PC-9 (cell line): ENCODE measurements at regions of chr1 and their contacts with region 1.

Region 1: GRCh38 chr1:214551436-214552173 is at the start of gene PTPN14:
- DNase-seq: peak; percentile 89 to 93
- H3K4me3 ChIP-seq: peak within 1 kb of the TSS; percentile 71
- H3K27ac ChIP-seq: peak within 1 kb of the TSS; percentile 97
- H3K4me1 ChIP-seq: peaks cover 48% of the 10 kb centered on the region
- H3K27me3 ChIP-seq: no peaks in the 10 kb centered on the region
- CTCF ChIP-seq: no peak; the same call in 1 of the 2 replicates
- total RNA-seq, gene PTPN14: 59.2 and 78.9 TPM in 2 replicates

Region 2: DNA sequence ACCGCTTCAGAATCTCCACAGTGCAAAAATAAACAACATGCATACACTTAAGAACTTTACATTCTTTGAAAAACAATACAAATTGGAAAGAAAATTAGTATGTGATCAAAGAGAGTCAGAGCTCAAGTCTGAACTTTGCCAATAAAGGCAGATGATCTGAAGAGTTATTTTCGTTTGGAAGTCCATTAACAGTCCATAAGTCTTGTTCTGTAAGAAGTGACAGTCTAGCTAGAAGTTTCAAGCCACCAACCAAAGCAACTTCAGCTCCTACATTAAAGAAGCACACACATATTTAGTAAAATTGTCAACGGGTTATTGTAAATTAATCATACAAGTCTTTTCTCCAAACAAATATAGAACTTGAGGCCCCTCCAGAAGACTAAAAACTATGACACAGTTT is 1556.7 kb before region 1 on chr1:
- CTCF ChIA-PET with region 1: no interaction called
- POLR2A ChIA-PET with region 1: no interaction called
- intact Hi-C with region 1: no loop called
- DNase-seq: no peak
- H3K4me3 ChIP-seq: no peak overlapping the region
- H3K27ac ChIP-seq: no peak overlapping the region
- H3K4me1 ChIP-seq: no peaks in the 10 kb centered on the region
- H3K27me3 ChIP-seq: no peaks in the 10 kb centered on the region
- CTCF ChIP-seq: no peak

Region 3: DNA sequence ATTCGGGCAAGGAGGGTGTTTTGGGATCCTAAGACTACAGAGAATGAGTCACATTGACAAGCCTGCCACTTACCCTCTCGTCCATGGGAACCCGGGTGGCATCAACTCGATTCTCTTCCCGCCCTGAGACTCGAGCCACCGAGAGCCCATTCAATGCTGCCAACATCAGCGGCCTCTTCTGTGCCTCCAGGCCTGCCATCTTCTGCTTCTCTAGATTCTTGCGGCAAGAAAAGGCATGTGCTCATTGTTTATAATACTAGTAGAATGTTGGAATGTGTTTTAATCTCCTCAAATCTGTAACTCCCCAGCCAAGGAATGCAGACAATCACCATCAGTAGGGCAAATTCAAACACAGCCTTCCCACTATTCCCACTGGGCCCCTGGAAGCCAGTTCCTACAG is 173.7 kb before region 1 on chr1:
- CTCF ChIA-PET with region 1: no interaction called
- POLR2A ChIA-PET with region 1: interaction called, 4 read pairs
- intact Hi-C with region 1: loop called (anchors 1 kb)
- DNase-seq: peak in 1 of 2 experiments; percentile 83
- H3K4me3 ChIP-seq: no peak overlapping the region
- H3K27ac ChIP-seq: no peak overlapping the region
- H3K4me1 ChIP-seq: peaks cover 26% of the 10 kb centered on the region
- H3K27me3 ChIP-seq: no peaks in the 10 kb centered on the region
- CTCF ChIP-seq: no peak

Region 4: DNA sequence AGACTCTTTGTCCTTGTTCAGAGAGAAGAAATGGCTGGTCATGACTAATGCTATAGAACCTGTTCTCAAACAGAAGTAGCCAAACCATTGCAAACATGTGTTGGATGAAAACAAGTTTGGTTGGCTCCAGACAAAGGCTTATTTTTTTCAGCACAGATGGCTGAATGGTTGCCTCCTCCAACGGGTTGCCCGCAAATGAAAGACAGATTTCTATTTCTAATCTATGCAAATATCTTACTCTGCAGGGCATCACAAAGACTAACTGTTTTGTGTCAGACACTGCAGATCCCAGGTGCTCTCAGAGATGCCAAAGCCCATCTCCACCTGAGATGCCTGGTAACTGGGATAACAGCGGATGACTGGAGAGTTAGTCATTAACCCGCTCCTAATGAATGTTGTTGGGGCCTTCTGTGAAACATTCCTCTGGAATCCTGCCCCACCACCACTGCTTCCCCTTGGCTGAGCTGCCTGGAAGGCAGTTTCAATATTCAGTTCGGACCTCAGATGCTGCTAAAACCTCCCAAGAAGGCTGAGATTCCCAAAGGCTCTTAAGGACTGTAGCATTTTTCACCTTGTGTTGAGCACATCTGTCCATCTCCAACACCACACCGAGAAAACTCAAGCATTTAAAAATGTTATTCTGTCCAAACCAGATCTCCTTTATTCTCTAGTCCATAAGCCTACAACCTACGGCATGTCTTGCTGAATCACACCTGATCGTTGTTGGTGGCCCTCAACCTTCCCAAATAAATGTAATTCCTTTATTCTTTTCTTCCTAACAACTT is 104.6 kb before region 1 on chr1:
- CTCF ChIA-PET with region 1: no interaction called
- POLR2A ChIA-PET with region 1: no interaction called
- intact Hi-C with region 1: loop called (anchors 1 kb)
- DNase-seq: peak; percentile 85 to 99
- H3K4me3 ChIP-seq: peak overlapping the region; percentile 44; the same call in 1 of the 2 replicates
- H3K27ac ChIP-seq: peak overlapping the region; percentile 90
- H3K4me1 ChIP-seq: peaks cover 50% of the 10 kb centered on the region
- H3K27me3 ChIP-seq: no peaks in the 10 kb centered on the region
- CTCF ChIP-seq: no peak

Region 5: GRCh38 chr1:214506972-214507482 is 44.6 kb before region 1 on chr1:
- CTCF ChIA-PET with region 1: no interaction called
- POLR2A ChIA-PET with region 1: interaction called, 13 read pairs
- intact Hi-C with region 1: loop called (anchors 1 kb)
- DNase-seq: peak; percentile 75 to 97
- H3K4me3 ChIP-seq: peak overlapping the region; percentile 6; the same call in 1 of the 2 replicates
- H3K27ac ChIP-seq: peak overlapping the region; percentile 13; the same call in 1 of the 2 replicates
- H3K4me1 ChIP-seq: peaks cover 47% of the 10 kb centered on the region
- H3K27me3 ChIP-seq: no peaks in the 10 kb centered on the region
- CTCF ChIP-seq: no peak

Region 6: GRCh38 chr1:214525535-214526019 is 26.0 kb before region 1 on chr1:
- CTCF ChIA-PET with region 1: interaction called, 3 read pairs
- POLR2A ChIA-PET with region 1: interaction called, 26 read pairs
- intact Hi-C with region 1: loop called (anchors 1 kb)
- DNase-seq: peak; percentile 77 to 96
- H3K4me3 ChIP-seq: peak overlapping the region; percentile 4; the same call in 1 of the 2 replicates
- H3K27ac ChIP-seq: peak overlapping the region; percentile 43
- H3K4me1 ChIP-seq: peaks cover 37% of the 10 kb centered on the region
- H3K27me3 ChIP-seq: no peaks in the 10 kb centered on the region
- CTCF ChIP-seq: no peak

Region 7: GRCh38 chr1:214602764-214603657 is 51.4 kb after region 1 on chr1 and contains the start of gene CENPF:
- CTCF ChIA-PET with region 1: no interaction called
- POLR2A ChIA-PET with region 1: interaction called, 8 read pairs
- intact Hi-C with region 1: loop called (anchors 1 kb)
- DNase-seq: peak; percentile 96 to 97
- H3K4me3 ChIP-seq: peak within 1 kb of the TSS; percentile 74
- H3K27ac ChIP-seq: no peak within 1 kb of the TSS
- H3K4me1 ChIP-seq: peaks cover 12% of the 10 kb centered on the region
- H3K27me3 ChIP-seq: no peaks in the 10 kb centered on the region
- CTCF ChIP-seq: no peak
- total RNA-seq, gene CENPF: 102 and 156 TPM in 2 replicates

Region 8: GRCh38 chr1:214801191-214801590 is 249.6 kb after region 1 on chr1:
- CTCF ChIA-PET with region 1: no interaction called
- POLR2A ChIA-PET with region 1: no interaction called
- intact Hi-C with region 1: no loop called
- DNase-seq: no peak
- H3K4me3 ChIP-seq: no peak overlapping the region
- H3K27ac ChIP-seq: no peak overlapping the region
- H3K4me1 ChIP-seq: no peaks in the 10 kb centered on the region
- H3K27me3 ChIP-seq: no peaks in the 10 kb centered on the region
- CTCF ChIP-seq: no peak

Region 9: GRCh38 chr1:214838351-214838750 is 286.7 kb after region 1 on chr1:
- CTCF ChIA-PET with region 1: no interaction called
- POLR2A ChIA-PET with region 1: no interaction called
- intact Hi-C with region 1: no loop called
- DNase-seq: no peak
- H3K4me3 ChIP-seq: no peak overlapping the region
- H3K27ac ChIP-seq: no peak overlapping the region
- H3K4me1 ChIP-seq: no peaks in the 10 kb centered on the region
- H3K27me3 ChIP-seq: no peaks in the 10 kb centered on the region
- CTCF ChIP-seq: no peak